Left colon (tissue), 2 donors: ENCODE measurements at regions of chr4 and their contacts with region 1.

Region 1: GRCh38 chr4:30719460-30720020 is 629 bp upstream of the PCDH7 start:
- DNase-seq: peak; percentile 33 to 34
- ATAC-seq: peak; percentile 47

Region 2: DNA sequence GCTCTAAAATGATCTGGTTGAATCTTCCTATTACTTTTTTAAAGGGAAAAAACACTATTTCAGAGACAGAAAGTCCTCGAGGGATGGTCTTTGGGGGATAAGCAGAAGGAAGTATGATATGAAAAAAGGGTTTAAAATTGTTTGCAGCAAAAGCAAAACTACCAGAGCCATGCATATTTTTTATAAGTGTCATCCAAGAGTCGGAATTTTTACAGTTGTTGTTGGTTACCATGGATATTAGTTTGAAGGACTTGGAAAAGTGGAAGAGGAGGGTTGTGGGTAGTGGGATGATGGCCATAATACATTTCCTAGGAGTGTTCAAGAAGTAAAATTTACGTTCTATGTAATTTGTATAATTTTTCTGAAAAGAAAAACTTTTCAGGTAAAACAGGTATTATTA is 135.0 kb after region 1 on chr4:
- intact Hi-C with region 1: loop called in 1 of 2 experiments (anchors 10 kb)
- DNase-seq: no peak
- ATAC-seq: no peak